ENCODE measurements at regions of chr2 and their contacts with region 1.

Region 1: DNA sequence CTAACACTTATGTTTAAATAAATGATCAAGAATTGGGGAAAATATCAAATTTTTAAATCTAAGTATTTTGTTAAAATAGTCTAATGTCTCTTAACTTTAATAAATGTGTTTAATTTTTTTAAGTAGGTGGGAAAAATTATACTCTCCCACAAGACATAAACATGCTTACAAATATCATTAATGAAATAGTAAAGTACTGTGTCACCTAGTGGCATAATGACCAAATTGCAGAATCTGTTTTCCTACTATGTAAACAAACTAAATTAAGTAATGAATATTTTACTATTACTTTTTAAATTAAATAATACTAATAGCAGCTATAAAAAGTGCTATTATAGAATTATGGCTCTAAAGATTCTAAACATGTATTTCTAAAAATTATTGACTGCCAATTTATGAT is 52.0 kb upstream of the CHAC2 start:
- DNase-seq: no peak
- H3K4me3 ChIP-seq: no peak overlapping the region
- H3K27ac ChIP-seq: peak overlapping the region in 1 of 59 donors; percentile 16
- H3K27me3 ChIP-seq: no peaks in the 10 kb centered on the region
- CTCF ChIP-seq: peak in 55 of 56 donors; percentile 31 to 73 (median 59)

Region 2: GRCh38 chr2:53167227-53167626 is 548.3 kb before region 1 on chr2:
- intact Hi-C with region 1: no loop called
- DNase-seq: no peak
- H3K4me3 ChIP-seq: no peak overlapping the region
- H3K27ac ChIP-seq: no peak overlapping the region
- H3K27me3 ChIP-seq: no peaks in the 10 kb centered on the region
- CTCF ChIP-seq: no peak

Region 3: DNA sequence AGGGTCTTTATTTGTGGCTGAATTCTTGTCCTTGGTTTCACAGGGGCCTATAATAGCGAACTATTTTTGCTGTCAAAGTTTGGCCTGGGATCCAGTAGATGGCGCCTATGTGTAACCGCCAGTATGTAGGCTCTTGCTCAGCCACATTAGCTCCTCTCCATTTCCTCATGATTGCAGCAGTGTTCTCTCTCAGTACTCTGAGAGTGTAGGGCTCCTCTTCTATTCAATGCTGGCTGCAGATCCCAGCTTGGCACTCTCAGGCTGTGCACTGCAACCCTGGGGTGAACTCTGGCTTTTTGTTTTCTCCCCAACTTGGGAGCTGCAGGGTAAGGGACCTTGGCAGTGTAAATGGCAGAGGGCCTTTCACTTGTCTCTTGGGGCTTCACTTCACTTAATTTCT is 292.6 kb before region 1 on chr2:
- intact Hi-C with region 1: loop called in 1 of 2 experiments (anchors 10 kb)
- DNase-seq: peak in 1 of 10 donors; percentile 27
- H3K4me3 ChIP-seq: no peak overlapping the region
- H3K27ac ChIP-seq: no peak overlapping the region
- H3K27me3 ChIP-seq: no peaks in the 10 kb centered on the region
- CTCF ChIP-seq: peak in 42 of 56 donors; percentile 10 to 61 (median 36)

Region 4: DNA sequence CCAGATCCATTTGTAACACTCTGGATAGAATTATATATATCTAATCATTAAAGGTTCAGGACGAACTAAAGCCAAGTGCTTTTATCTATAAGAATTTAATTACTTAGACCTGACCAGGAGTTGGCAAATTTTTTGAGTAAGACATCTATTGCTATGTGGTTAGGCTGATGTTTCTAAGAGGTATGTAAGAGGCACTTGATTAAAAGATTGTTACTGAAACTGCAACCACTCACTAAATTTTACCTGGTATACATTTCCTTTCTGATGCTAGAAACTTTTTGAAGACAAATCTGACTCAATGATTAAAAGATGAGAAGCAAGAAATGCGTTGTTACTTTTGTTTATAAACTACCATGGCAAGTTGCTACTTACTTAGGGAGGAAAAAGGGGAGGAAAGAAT is 24.7 kb before region 1 on chr2:
- intact Hi-C with region 1: no loop called
- DNase-seq: no peak
- H3K4me3 ChIP-seq: no peak overlapping the region
- H3K27ac ChIP-seq: no peak overlapping the region
- H3K27me3 ChIP-seq: no peaks in the 10 kb centered on the region
- CTCF ChIP-seq: no peak

Region 5: GRCh38 chr2:54015798-54016699 is 300.5 kb after region 1 on chr2:
- intact Hi-C with region 1: no loop called
- DNase-seq: no peak
- H3K4me3 ChIP-seq: no peak overlapping the region
- H3K27ac ChIP-seq: peak overlapping the region in 42 of 59 donors; percentile 0 to 78 (median 45)
- H3K27me3 ChIP-seq: no peaks in the 10 kb centered on the region
- CTCF ChIP-seq: no peak

Region 6: GRCh38 chr2:54370405-54371104 is 655.0 kb after region 1 on chr2:
- intact Hi-C with region 1: no loop called
- DNase-seq: no peak
- H3K4me3 ChIP-seq: no peak overlapping the region
- H3K27ac ChIP-seq: peak overlapping the region in 33 of 59 donors; percentile 5 to 68 (median 41)
- H3K27me3 ChIP-seq: no peaks in the 10 kb centered on the region
- CTCF ChIP-seq: no peak